OCI-LY7 (cell line): ENCODE measurements at regions of chr5 and their contacts with region 1.

Region 1: GRCh38 chr5:131375351-131375750 is 111.5 kb downstream of the CDC42SE2 start:
- DNase-seq: no peak
- H3K4me3 ChIP-seq: peak overlapping the region; percentile 15
- H3K27ac ChIP-seq: peak overlapping the region; percentile 57
- H3K4me1 ChIP-seq: peaks cover 64% of the 10 kb centered on the region
- CTCF ChIP-seq: no peak

Region 2: DNA sequence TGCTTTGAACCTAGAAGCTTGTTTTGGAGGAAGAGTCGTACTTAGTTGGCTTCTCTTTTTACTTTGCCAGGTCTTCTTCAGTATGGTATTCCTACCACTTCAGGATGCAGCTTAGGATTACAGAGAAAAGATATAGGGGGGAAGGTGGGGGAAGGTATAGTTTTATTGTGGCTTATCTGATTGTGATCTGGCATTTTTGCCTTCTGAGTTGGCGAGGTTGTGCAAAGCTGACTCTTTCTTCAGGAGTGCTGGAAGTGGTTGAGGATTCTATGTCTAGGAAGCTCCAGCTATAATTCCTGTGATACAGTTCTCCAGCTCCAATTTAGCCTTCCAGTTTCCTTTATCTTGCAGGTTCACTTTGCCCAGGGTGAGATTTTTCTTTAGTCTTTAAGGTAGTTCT is 104.5 kb before region 1 on chr5:
- CTCF ChIA-PET with region 1: no interaction called
- POLR2A ChIA-PET with region 1: interaction called, 27 read pairs
- intact Hi-C with region 1: no loop called
- DNase-seq: no peak
- H3K4me3 ChIP-seq: peak overlapping the region; percentile 65
- H3K27ac ChIP-seq: peak overlapping the region; percentile 65
- H3K4me1 ChIP-seq: peaks cover 93% of the 10 kb centered on the region
- CTCF ChIP-seq: no peak

Region 3: DNA sequence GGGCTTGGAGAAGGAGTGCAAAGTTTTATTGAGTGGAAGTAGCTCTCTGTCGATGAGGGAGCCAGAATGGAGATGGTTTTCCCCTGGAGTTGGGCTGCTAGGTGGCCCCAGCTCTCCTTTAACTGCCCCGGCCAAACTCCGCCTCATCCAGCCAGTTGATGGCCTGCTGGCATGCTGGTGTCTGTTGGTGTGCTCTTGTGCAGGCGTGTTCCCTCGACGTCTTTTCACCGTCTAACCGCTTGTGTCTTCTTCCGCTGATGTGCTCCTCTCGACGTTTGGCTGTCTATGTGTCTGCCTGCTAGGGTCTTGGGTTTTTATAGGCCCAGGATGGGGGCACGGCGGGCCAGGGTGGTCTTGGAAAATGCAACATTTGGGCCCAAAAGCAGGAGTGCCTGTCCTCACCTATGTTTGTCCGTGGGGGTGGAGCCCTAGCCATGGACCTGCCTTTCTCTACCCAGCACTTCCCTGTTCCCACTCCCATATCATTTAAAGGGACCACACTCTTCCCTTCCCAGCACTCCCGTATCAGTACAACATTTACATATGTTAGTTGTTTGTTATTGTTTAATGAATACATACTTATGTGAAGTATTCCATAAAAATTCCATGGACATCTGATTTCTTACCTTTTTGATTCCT is 13.6 kb before region 1 on chr5:
- CTCF ChIA-PET with region 1: no interaction called
- POLR2A ChIA-PET with region 1: interaction called, 18 read pairs
- intact Hi-C with region 1: no loop called
- DNase-seq: no peak
- H3K4me3 ChIP-seq: no peak overlapping the region
- H3K27ac ChIP-seq: no peak overlapping the region
- H3K4me1 ChIP-seq: peaks cover 14% of the 10 kb centered on the region
- CTCF ChIP-seq: no peak

Region 4: DNA sequence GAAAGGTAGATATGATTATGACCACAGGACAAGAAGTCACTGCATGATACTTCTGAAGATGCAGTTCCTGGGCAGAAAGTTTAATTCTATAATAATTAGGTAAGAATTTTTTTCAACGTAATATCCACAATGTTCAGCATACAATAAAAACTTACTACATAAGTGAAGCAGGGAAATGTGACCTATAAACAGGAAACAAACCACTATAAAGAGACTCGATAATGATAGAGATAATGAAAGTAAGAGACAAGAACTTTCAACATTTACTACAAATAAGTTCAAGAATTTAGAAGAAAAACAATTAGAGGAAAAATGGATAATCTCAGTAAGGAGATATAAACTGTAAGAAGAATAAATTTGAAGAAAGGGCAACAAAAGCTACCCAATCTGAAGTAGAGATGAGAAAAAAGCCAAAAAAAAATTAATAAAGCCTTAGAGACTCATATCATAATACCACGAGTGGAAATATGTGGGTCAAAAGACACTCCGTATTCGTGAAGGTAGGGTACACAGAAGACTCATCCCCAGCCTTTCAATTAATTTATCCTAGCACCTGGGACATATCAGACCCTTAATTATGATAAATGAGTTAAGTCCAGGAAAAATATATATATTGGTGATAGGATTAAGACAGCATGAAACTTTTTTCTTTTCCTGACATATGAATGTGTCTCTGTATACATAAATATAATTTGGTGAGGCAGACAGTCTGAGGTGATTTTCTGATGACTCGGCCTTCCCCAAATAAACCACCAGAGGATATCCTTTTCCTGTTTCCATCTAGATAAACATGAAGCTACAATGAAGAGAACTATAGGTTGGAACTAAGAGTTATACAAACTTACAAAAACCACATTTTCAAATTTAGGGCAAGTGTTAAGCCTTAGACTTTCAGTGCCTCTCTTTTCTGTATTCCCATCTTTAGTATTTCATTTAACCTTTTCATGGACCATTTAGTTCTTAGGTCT is 139.2 kb after region 1 on chr5:
- CTCF ChIA-PET with region 1: no interaction called
- POLR2A ChIA-PET with region 1: no interaction called
- intact Hi-C with region 1: no loop called
- DNase-seq: no peak
- H3K4me3 ChIP-seq: no peak overlapping the region
- H3K27ac ChIP-seq: no peak overlapping the region
- H3K4me1 ChIP-seq: peaks cover 10% of the 10 kb centered on the region
- CTCF ChIP-seq: no peak